Activated CD4-positive, alpha-beta T cell treated with anti-CD3 and anti-CD28 coated beads for 36 hours (primary cell): ENCODE measurements at regions of chr6 and their contacts with region 1.

Region 1: GRCh38 chr6:45163952-45164766 is 164.0 kb upstream of the RUNX2 start:
- DNase-seq: peak; percentile 61
- ATAC-seq: peak; percentile 92
- H3K4me3 Mint-ChIP-seq: peak overlapping the region; percentile 21
- H3K27ac Mint-ChIP-seq: peak overlapping the region; percentile 93
- H3K4me1 Mint-ChIP-seq: peaks cover 47% of the 10 kb centered on the region
- H3K27me3 Mint-ChIP-seq: no peaks in the 10 kb centered on the region

Region 2: GRCh38 chr6:44642870-44643529 is 521.2 kb before region 1 on chr6:
- CTCF ChIA-PET with region 1: no interaction called
- POLR2A ChIA-PET with region 1: no interaction called
- intact Hi-C with region 1: loop called (anchors 1 to 5 kb)
- DNase-seq: peak; percentile 85
- ATAC-seq: peak; percentile 87
- H3K4me3 Mint-ChIP-seq: peak overlapping the region; percentile 21
- H3K27ac Mint-ChIP-seq: peak overlapping the region; percentile 93
- H3K4me1 Mint-ChIP-seq: peaks cover 38% of the 10 kb centered on the region
- H3K27me3 Mint-ChIP-seq: peaks cover 2% of the 10 kb centered on the region

Region 3: GRCh38 chr6:44976719-44977641 is 187.2 kb before region 1 on chr6:
- CTCF ChIA-PET with region 1: no interaction called
- POLR2A ChIA-PET with region 1: no interaction called
- intact Hi-C with region 1: loop called in 1 of 2 experiments (anchors 1 kb)
- DNase-seq: no peak
- ATAC-seq: peak; percentile 81
- H3K4me3 Mint-ChIP-seq: peak overlapping the region; percentile 2
- H3K27ac Mint-ChIP-seq: peak overlapping the region; percentile 68
- H3K4me1 Mint-ChIP-seq: peaks cover 46% of the 10 kb centered on the region
- H3K27me3 Mint-ChIP-seq: no peaks in the 10 kb centered on the region

Region 4: GRCh38 chr6:44989391-44989790 is 174.8 kb before region 1 on chr6:
- CTCF ChIA-PET with region 1: no interaction called
- POLR2A ChIA-PET with region 1: no interaction called
- intact Hi-C with region 1: no loop called
- DNase-seq: no peak
- ATAC-seq: no peak
- H3K4me3 Mint-ChIP-seq: no peak overlapping the region
- H3K27ac Mint-ChIP-seq: no peak overlapping the region
- H3K4me1 Mint-ChIP-seq: peaks cover 9% of the 10 kb centered on the region
- H3K27me3 Mint-ChIP-seq: no peaks in the 10 kb centered on the region

Region 5: DNA sequence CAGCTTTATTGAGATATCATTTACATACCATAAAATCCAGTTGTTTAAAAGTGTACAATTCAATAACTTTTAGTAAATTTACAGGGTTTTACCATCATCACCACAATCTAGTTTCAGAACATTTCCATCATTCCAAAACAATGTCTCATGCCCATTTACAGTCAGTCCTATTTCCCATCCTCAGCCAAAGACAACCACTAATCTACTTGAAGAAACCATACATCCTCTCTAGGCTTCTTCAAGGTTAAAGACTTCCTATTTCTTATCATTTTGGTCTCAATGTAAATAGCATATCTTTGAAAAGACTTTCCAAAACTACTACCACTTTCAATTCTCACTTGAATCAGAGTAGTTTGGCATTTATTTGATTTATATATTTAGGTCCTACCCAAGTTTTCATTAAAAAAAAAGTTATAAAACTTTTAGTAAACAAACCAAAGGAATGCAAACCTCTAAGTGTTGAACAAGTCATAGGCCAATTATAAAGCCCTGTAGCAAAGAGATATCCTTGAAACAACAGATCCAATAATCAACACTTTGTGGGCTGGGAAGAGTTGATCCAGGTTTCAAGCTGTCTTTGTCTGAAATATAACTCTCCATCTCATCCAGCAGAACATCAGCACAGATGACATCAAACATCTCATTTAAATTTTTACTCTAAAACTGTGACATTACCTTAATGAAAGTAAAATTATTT is 47.3 kb before region 1 on chr6:
- CTCF ChIA-PET with region 1: no interaction called
- POLR2A ChIA-PET with region 1: no interaction called
- intact Hi-C with region 1: loop called in 1 of 2 experiments (anchors 2 kb)
- DNase-seq: no peak
- ATAC-seq: peak; percentile 85
- H3K4me3 Mint-ChIP-seq: no peak overlapping the region
- H3K27ac Mint-ChIP-seq: peak overlapping the region; percentile 58
- H3K4me1 Mint-ChIP-seq: peaks cover 22% of the 10 kb centered on the region
- H3K27me3 Mint-ChIP-seq: no peaks in the 10 kb centered on the region

Region 6: DNA sequence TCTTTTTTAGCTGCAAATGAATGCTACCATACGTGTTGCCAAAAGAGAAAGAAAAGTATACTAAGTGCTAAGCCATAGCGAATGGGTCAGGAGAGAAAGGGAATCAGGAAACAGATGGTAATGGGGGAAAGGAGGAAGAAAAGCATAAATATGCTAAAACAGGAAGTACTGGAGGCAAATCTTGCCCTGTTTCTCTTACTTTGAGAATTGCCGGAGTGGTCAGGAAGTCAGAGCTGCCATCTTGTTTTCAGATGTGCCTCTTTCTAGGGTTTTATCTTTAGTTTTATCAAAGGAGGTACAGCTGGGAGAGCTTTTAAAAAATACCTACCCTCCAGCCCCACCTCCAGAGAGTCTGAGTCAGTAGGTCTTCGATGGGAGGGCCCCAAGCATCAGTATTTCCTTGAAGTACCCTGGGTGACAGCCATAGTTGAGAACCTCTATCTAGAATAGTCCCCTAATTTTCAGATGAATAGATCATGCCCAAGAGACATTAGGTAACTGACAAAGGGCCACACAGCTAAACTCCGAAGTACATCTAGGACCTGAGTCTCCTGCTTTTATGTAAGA is 658.2 kb after region 1 on chr6:
- CTCF ChIA-PET with region 1: no interaction called
- POLR2A ChIA-PET with region 1: no interaction called
- intact Hi-C with region 1: loop called in 1 of 2 experiments (anchors 10 kb)
- DNase-seq: peak; percentile 59
- ATAC-seq: peak; percentile 87
- H3K4me3 Mint-ChIP-seq: peak overlapping the region; percentile 59
- H3K27ac Mint-ChIP-seq: peak overlapping the region; percentile 95
- H3K4me1 Mint-ChIP-seq: peaks cover 37% of the 10 kb centered on the region
- H3K27me3 Mint-ChIP-seq: peaks cover 5% of the 10 kb centered on the region